ENCODE measurements at regions of chr7 and their contacts with region 1.

Region 1: GRCh38 chr7:93902777-93903423 is 3.5 kb upstream of the GNGT1 start:
- DNase-seq: no peak
- H3K4me3 ChIP-seq: no peak overlapping the region
- H3K27me3 ChIP-seq: no peaks in the 10 kb centered on the region
- CTCF ChIP-seq: peak; percentile 88

Region 2: DNA sequence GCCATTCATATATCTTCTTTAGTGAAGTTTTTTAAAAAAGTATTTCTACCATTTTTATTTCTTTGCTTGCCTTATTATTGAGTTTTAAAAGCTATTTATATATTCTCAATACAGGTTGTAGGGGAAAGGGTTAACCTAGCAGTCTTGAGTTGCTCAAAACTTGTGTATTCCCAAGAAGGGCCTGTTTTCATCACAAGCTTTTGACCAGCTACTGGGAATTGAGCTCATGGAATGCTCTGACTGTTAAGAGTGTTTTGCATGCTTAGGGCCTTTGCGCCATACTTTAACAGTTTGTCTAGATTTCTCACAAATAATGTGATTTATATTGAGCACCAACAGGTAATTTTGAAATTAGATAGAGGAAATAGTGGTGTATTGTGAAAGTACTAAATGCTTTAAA is 256.4 kb before region 1 on chr7:
- CTCF ChIA-PET with region 1: no interaction called
- POLR2A ChIA-PET with region 1: no interaction called
- DNase-seq: no peak
- H3K4me3 ChIP-seq: no peak overlapping the region
- H3K27me3 ChIP-seq: no peaks in the 10 kb centered on the region
- CTCF ChIP-seq: no peak

Region 3: GRCh38 chr7:93663561-93664299 is 239.2 kb before region 1 on chr7:
- CTCF ChIA-PET with region 1: no interaction called
- POLR2A ChIA-PET with region 1: no interaction called
- DNase-seq: no peak
- H3K4me3 ChIP-seq: no peak overlapping the region
- H3K27me3 ChIP-seq: no peaks in the 10 kb centered on the region
- CTCF ChIP-seq: no peak

Region 4: GRCh38 chr7:93890464-93891068 is 12.3 kb before region 1 on chr7 and contains the start of gene TFPI2:
- CTCF ChIA-PET with region 1: interaction called, 15 read pairs
- POLR2A ChIA-PET with region 1: no interaction called
- DNase-seq: no peak
- H3K4me3 ChIP-seq: peak within 1 kb of the TSS; percentile 57
- H3K27me3 ChIP-seq: no peaks in the 10 kb centered on the region
- CTCF ChIP-seq: 0 out of 2 replicates have a peak, but pooled peaks have one; percentile 13
- polyA plus RNA-seq, gene TFPI2: 113 and 143 TPM in 2 replicates

Region 5: GRCh38 chr7:94087664-94088352 is 184.9 kb after region 1 on chr7:
- CTCF ChIA-PET with region 1: interaction called, 29 read pairs
- POLR2A ChIA-PET with region 1: no interaction called
- DNase-seq: no peak
- H3K4me3 ChIP-seq: no peak overlapping the region
- H3K27me3 ChIP-seq: no peaks in the 10 kb centered on the region
- CTCF ChIP-seq: peak; percentile 70

Measured in BJ (cell line).